ENCODE measurements at regions of chr5 and their contacts with region 1.

Region 1: DNA sequence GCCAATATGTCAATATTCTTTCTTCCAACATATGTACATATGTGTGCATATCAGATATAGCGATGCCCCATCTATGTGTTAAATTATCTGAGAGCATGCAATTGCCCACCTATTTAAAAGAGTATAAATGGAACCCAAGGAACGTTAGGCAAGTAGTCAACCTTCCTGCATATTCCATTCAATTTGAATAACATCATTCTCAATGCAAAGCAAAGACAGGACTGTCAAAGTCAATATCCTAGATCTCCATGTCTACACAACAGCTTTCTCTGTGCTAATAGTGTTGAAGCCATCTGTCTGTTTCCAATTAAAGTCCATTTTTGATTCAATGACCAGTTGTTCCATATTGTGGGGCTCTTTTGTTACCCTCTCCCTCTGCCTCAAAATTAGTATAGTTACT is 85.3 kb upstream of the COX7C start:
- DNase-seq: no peak
- ATAC-seq: no peak
- H3K4me3 ChIP-seq: no peak overlapping the region
- H3K4me3 Mint-ChIP-seq: no peak overlapping the region
- H3K27ac ChIP-seq: no peak overlapping the region
- H3K27ac Mint-ChIP-seq: no peak overlapping the region
- H3K4me1 ChIP-seq: no peaks in the 10 kb centered on the region
- H3K4me1 Mint-ChIP-seq: no peaks in the 10 kb centered on the region
- H3K27me3 ChIP-seq: no peaks in the 10 kb centered on the region
- H3K27me3 Mint-ChIP-seq: peaks cover 9 to 10% of the 10 kb centered on the region in 2 donors

Region 2: DNA sequence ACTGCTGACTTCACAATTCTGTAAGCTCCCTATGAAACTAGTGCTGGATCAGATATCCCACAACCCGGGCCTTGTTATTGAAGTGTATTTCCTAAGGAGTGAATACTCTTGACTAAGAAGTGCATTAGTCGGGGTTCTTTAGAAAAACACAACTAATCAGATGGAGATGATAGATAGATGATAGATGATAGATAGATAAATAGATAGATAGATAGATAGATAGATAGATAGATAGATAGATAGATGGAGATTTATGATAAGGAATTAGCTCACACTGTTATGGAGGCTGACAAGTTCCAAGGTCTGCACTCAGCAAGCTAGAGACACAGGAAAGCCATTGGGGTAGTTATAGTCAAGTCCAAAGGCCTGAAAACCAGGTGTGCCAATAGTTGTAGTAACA is 129.2 kb before region 1 on chr5:
- CTCF ChIA-PET with region 1: no interaction called
- POLR2A ChIA-PET with region 1: interaction called in 1 of 2 experiments, 10 read pairs
- DNase-seq: no peak
- ATAC-seq: no peak
- H3K4me3 ChIP-seq: no peak overlapping the region
- H3K4me3 Mint-ChIP-seq: no peak overlapping the region
- H3K27ac ChIP-seq: no peak overlapping the region
- H3K27ac Mint-ChIP-seq: no peak overlapping the region
- H3K4me1 ChIP-seq: no peaks in the 10 kb centered on the region
- H3K4me1 Mint-ChIP-seq: no peaks in the 10 kb centered on the region
- H3K27me3 ChIP-seq: no peaks in the 10 kb centered on the region
- H3K27me3 Mint-ChIP-seq: no peaks in the 10 kb centered on the region

Region 3: GRCh38 chr5:86554638-86555037 is 22.2 kb after region 1 on chr5:
- CTCF ChIA-PET with region 1: no interaction called
- POLR2A ChIA-PET with region 1: no interaction called
- DNase-seq: no peak
- ATAC-seq: no peak
- H3K4me3 ChIP-seq: no peak overlapping the region
- H3K4me3 Mint-ChIP-seq: no peak overlapping the region
- H3K27ac ChIP-seq: no peak overlapping the region
- H3K27ac Mint-ChIP-seq: no peak overlapping the region
- H3K4me1 ChIP-seq: no peaks in the 10 kb centered on the region
- H3K4me1 Mint-ChIP-seq: no peaks in the 10 kb centered on the region
- H3K27me3 ChIP-seq: peaks cover 0 to 3% of the 10 kb centered on the region in 2 experiments
- H3K27me3 Mint-ChIP-seq: no peaks in the 10 kb centered on the region

Region 4: DNA sequence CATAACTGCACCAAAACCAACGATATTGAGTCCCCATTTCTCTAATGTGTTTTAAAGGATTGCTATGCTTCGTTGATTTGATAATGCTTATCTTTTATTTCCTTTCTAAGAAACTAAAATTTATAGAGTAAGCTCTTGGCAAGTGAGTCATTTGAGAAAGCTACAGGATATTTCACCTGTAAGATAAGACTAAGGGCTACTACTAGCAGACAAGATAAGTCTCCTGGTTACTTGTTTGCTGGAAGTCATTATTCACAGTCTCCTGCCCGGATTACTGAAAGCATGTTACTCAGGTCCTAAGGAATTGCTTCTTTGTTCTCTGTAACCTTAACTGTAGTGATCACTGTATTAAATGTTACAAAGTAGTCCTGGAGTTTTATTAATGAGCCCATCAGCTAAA is 419.3 kb after region 1 on chr5:
- CTCF ChIA-PET with region 1: no interaction called
- POLR2A ChIA-PET with region 1: no interaction called
- DNase-seq: no peak
- ATAC-seq: no peak
- H3K4me3 ChIP-seq: no peak overlapping the region
- H3K4me3 Mint-ChIP-seq: no peak overlapping the region
- H3K27ac ChIP-seq: no peak overlapping the region
- H3K27ac Mint-ChIP-seq: no peak overlapping the region
- H3K4me1 ChIP-seq: no peaks in the 10 kb centered on the region
- H3K4me1 Mint-ChIP-seq: no peaks in the 10 kb centered on the region
- H3K27me3 ChIP-seq: no peaks in the 10 kb centered on the region
- H3K27me3 Mint-ChIP-seq: peaks cover 12 to 16% of the 10 kb centered on the region in 2 donors

Measured in T-cell (primary cell).